A673 (cell line): ENCODE measurements at regions of chrX and their contacts with region 1.

Region 1: DNA sequence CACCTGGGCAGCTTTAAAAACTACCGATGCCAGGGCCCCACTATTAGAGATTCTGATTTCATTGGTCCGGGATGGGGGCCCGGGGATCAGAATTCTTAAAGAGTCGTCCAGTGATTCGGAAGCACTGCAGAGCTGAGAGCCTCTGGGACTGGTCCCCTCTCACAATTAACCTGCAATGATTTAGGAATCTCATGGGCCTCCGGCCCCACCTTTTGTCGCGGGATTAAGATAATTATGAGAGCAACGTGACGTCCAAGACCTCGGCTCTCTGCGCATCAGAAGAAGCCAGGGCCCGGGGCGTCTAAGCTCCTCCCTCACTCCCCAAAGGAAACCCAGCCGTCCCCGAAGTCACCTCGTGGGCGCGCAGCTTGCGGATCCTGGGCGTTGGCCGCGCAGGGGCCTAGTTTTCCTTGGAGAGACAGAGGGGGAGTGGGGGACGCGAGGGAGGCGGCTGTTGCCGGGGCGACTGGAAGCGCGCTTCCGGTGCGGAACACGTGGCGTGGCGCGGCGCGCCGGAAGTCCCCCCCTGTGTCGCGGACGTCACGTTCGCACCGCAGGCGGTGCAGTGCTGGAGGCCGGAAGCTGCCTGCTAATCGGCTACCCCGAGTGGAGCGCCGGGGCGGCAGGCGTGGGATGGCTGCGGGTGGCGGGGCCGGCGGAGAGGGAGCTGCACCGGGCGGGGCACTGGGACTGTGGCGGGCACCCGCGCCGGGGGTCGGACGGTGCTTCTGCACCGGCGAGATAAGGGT is at the start of gene GEMIN8:
- DNase-seq: peak; percentile 95
- H3K4me3 ChIP-seq: peak within 1 kb of the TSS; percentile 52
- H3K27ac ChIP-seq: peak within 1 kb of the TSS; percentile 86
- H3K4me1 ChIP-seq: peaks cover 9% of the 10 kb centered on the region
- H3K27me3 ChIP-seq: no peaks in the 10 kb centered on the region
- CTCF ChIP-seq: no peak
- total RNA-seq, gene GEMIN8: 9.2 and 12.7 TPM in 2 replicates

Region 2: DNA sequence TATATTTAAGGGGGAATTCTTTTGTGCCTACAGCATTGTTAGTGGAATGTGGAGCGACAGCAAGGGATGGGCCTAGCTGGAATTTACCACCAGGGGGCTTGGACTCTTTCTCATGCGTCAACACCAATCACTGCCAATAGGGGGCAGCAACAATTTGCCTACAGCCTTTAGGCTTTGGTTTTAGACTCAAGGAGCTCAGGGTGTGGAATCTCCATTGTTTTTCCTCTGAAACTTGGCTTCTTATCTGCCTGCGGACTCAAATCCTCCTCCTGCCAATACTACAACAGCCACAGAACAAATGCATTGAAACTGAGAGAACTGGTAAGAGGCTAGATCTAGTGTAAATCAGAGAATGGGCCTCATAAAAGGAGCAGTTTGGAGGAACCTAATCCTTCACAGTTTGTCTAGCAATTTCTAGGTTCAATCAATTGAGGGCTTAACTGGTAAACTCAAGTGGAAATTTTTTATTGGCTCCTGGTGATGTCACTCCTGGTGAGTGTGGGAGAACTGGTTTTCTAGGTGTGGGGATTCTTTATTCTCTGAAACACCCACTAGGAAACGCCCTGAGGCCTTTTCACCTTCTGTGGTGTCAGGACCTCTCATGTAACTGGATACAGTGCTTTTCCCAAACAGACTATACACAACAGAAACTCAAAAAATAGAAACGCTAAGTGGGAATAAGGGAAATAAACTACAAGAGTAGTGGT is 1082.6 kb before region 1 on chrX:
- CTCF ChIA-PET with region 1: no interaction called
- POLR2A ChIA-PET with region 1: interaction called, 3 read pairs
- intact Hi-C with region 1: loop called (anchors 10 kb)
- DNase-seq: peak; percentile 89
- H3K4me3 ChIP-seq: no peak overlapping the region
- H3K27ac ChIP-seq: peak overlapping the region; percentile 51
- H3K4me1 ChIP-seq: peaks cover 37% of the 10 kb centered on the region
- H3K27me3 ChIP-seq: no peaks in the 10 kb centered on the region
- CTCF ChIP-seq: peak; percentile 99

Region 3: GRCh38 chrX:13506574-13506973 is 523.0 kb before region 1 on chrX:
- CTCF ChIA-PET with region 1: interaction called, 7 read pairs
- POLR2A ChIA-PET with region 1: interaction called, 3 read pairs
- intact Hi-C with region 1: loop called (anchors 1 kb)
- DNase-seq: peak; percentile 75
- H3K4me3 ChIP-seq: no peak overlapping the region
- H3K27ac ChIP-seq: no peak overlapping the region
- H3K4me1 ChIP-seq: no peaks in the 10 kb centered on the region
- H3K27me3 ChIP-seq: no peaks in the 10 kb centered on the region
- CTCF ChIP-seq: peak; percentile 87

Region 4: GRCh38 chrX:13658602-13659001 is 371.0 kb before region 1 on chrX:
- CTCF ChIA-PET with region 1: no interaction called
- POLR2A ChIA-PET with region 1: no interaction called
- intact Hi-C with region 1: loop called (anchors 1 kb)
- DNase-seq: peak; percentile 72
- H3K4me3 ChIP-seq: no peak overlapping the region
- H3K27ac ChIP-seq: no peak overlapping the region
- H3K4me1 ChIP-seq: no peaks in the 10 kb centered on the region
- H3K27me3 ChIP-seq: no peaks in the 10 kb centered on the region
- CTCF ChIP-seq: peak; percentile 75

Region 5: GRCh38 chrX:13750204-13750603 is 279.4 kb before region 1 on chrX:
- CTCF ChIA-PET with region 1: interaction called, 6 read pairs
- POLR2A ChIA-PET with region 1: no interaction called
- intact Hi-C with region 1: loop called (anchors 1 kb)
- DNase-seq: peak; percentile 39
- H3K4me3 ChIP-seq: no peak overlapping the region
- H3K27ac ChIP-seq: no peak overlapping the region
- H3K4me1 ChIP-seq: no peaks in the 10 kb centered on the region
- H3K27me3 ChIP-seq: no peaks in the 10 kb centered on the region
- CTCF ChIP-seq: peak; percentile 66

Region 6: DNA sequence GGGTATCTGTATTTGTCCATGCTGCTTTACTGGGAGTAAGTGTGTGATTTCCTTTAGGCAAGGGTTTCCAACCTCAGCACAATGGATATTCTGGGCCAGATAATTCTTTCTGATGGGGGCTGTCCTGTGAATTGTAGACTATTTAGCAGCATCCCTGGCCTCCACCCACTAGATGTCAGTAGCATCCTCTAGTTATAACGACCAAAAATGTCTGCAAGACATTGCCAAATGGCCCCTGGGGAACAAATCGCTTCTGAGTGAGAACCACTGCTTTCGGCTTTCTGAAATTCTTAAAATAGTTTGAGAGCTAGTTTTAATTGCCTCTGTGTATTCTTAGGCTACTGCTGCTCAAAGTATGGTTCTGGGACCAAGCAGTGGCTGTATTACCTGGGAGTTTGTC is 131.5 kb before region 1 on chrX:
- CTCF ChIA-PET with region 1: no interaction called
- POLR2A ChIA-PET with region 1: no interaction called
- intact Hi-C with region 1: loop called (anchors 1 kb)
- DNase-seq: peak; percentile 72
- H3K4me3 ChIP-seq: no peak overlapping the region
- H3K27ac ChIP-seq: no peak overlapping the region
- H3K4me1 ChIP-seq: no peaks in the 10 kb centered on the region
- H3K27me3 ChIP-seq: no peaks in the 10 kb centered on the region
- CTCF ChIP-seq: peak; percentile 53

Region 7: DNA sequence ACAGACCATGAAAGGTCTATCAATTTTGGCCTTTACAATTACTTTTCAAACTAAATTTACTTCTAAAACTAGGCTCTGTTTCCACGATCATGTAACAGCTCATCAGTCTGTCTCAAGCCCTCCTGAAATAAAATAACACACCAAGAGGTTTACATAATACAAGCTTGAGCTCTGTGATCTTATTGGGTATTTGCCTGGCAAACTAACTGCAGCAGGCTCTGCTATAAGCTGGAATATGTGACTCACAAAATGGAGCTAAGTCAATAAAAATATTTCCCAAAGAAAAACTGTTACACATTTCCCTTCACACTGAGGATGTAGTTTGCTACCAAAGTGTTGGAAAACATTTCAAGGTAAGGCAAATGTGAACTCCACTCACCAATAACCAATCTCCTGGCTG is 118.0 kb before region 1 on chrX:
- CTCF ChIA-PET with region 1: no interaction called
- POLR2A ChIA-PET with region 1: no interaction called
- intact Hi-C with region 1: no loop called
- DNase-seq: no peak
- H3K4me3 ChIP-seq: no peak overlapping the region
- H3K27ac ChIP-seq: no peak overlapping the region
- H3K4me1 ChIP-seq: no peaks in the 10 kb centered on the region
- H3K27me3 ChIP-seq: peaks cover 5% of the 10 kb centered on the region
- CTCF ChIP-seq: no peak